Tibial artery (tissue), 4 donors: ENCODE measurements at regions of chr1 and their contacts with region 1.

Region 1: DNA sequence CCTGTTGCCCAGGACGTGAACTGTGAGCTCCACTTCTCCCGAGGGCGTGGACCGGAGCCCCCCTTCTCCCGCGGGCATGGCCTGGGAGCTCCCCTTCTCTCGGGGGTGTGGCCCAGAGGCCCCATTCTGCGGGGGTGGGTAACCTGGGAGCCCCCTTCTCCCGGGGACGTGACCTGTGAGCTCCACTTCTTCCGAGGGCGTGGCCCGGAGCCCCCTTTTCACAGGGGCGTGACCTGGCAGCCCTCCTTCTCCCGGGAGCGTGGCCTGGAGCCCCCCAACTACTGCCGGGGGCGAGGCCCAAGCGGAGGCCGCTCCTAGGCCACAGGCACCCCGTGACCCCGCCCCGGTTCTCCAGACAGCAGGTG is 336 bp downstream of the C1orf174 start:
- DNase-seq: no peak
- H3K4me3 ChIP-seq: peak overlapping the region; percentile 92 to 98
- H3K27ac ChIP-seq: peak overlapping the region; percentile 96 to 98
- H3K4me1 ChIP-seq: peaks cover 0 to 14% (median 10%) of the 10 kb centered on the region in 4 donors
- H3K27me3 ChIP-seq: no peaks in the 10 kb centered on the region
- CTCF ChIP-seq: no peak

Region 2: GRCh38 chr1:3856908-3857790 is 42.6 kb before region 1 on chr1 and contains the starts of genes CEP104 and DFFB:
- intact Hi-C with region 1: loop called (anchors 5 kb)
- DNase-seq: peak; percentile 85 to 91
- H3K4me3 ChIP-seq: peak within 1 kb of the TSS; percentile 84 to 92
- H3K27ac ChIP-seq: peak within 1 kb of the TSS; percentile 80 to 82
- H3K4me1 ChIP-seq: peaks cover 0 to 24% (median 19%) of the 10 kb centered on the region in 4 donors
- H3K27me3 ChIP-seq: no peaks in the 10 kb centered on the region
- CTCF ChIP-seq: no peak